A673 (cell line): ENCODE measurements at regions of chr14 and their contacts with region 1.

Region 1: DNA sequence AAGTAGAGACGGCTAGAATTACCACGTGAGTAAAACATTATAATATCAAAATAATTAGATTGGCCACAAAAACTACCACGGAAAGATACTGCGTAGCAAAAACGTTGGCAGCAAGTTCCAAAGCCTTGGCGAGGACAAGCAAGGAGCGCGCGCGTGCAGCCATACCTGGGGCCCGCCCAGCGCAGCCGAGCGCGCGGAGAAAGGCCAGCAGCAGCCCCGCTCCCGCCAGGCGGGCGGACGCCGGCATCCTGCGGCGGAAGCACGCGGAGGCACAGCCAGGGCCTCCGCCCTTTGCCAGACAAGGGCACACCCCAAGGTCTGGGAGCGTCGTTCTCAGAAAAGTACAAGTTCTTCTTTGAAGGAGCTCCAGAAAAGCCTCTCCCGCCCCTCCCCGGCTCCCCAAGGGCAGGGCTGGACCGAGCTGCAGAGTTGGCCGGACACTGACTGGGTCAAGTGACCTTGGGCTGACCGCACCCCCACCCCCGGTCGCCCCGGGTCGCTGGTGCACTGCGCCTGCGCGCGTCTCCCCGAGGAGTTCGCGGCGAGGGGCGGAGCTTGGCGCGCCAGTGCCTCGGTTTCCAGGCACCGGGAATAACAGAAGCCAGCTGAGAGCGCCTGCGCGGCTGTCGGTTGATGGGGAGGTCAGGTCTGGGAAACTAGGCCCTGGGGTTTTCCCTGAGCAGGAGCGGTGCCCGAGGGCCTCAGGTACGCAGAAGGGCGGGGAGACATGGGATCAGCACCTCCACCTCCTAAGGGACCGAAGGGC is at the start of gene ZC2HC1C:
- DNase-seq: peak; percentile 67
- H3K4me3 ChIP-seq: peak within 1 kb of the TSS; percentile 52
- H3K27ac ChIP-seq: peak within 1 kb of the TSS; percentile 85
- H3K4me1 ChIP-seq: peaks cover 18% of the 10 kb centered on the region
- H3K27me3 ChIP-seq: no peaks in the 10 kb centered on the region
- CTCF ChIP-seq: no peak
- total RNA-seq, gene ZC2HC1C: 1.0 TPM in 2 replicates

Region 2: DNA sequence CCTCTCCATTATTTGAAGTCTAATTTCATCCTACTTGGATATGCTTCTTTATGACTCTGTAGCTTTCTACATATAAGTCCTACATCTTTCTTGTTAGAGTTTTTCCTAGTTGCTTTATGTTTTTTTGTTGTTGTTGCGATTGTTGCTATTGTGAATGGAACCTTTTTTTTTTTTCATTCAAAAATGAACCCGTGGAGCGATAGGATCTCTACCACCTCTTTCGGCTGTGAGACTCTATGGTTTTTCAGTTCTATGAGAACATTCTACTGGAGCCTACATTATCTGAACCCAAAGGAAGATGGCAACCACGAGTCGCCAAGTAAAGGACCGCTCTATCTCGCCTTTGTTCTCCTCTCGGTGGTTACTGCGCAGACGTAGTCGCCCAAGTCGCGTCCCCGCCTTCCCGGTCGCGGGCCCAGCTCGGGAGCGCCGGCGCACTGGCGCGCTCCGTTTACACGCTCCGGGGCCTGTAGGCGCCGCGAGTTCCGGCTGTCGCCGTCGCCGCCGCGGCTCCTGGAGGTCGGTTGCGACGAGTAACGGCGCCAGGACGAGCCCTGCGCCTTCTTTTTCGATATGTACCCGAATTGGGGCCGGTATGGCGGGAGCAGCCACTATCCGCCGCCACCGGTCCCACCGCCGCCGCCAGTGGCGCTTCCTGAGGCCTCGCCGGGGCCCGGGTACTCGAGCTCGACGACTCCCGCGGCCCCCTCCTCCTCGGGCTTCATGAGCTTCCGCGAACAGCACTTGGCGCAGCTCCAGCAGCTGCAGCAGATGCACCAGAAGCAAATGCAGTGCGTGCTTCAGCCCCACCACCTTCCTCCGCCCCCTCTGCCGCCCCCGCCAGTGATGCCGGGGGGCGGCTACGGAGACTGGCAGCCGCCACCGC is 306.1 kb before region 1 on chr14 and contains the start of gene YLPM1:
- CTCF ChIA-PET with region 1: no interaction called
- POLR2A ChIA-PET with region 1: no interaction called
- intact Hi-C with region 1: no loop called
- DNase-seq: peak; percentile 98
- H3K4me3 ChIP-seq: peak within 1 kb of the TSS; percentile 94
- H3K27ac ChIP-seq: peak within 1 kb of the TSS; percentile 95
- H3K4me1 ChIP-seq: no peaks in the 10 kb centered on the region
- H3K27me3 ChIP-seq: no peaks in the 10 kb centered on the region
- CTCF ChIP-seq: peak; percentile 65
- total RNA-seq, gene YLPM1: 91.2 and 94.3 TPM in 2 replicates

Region 3: DNA sequence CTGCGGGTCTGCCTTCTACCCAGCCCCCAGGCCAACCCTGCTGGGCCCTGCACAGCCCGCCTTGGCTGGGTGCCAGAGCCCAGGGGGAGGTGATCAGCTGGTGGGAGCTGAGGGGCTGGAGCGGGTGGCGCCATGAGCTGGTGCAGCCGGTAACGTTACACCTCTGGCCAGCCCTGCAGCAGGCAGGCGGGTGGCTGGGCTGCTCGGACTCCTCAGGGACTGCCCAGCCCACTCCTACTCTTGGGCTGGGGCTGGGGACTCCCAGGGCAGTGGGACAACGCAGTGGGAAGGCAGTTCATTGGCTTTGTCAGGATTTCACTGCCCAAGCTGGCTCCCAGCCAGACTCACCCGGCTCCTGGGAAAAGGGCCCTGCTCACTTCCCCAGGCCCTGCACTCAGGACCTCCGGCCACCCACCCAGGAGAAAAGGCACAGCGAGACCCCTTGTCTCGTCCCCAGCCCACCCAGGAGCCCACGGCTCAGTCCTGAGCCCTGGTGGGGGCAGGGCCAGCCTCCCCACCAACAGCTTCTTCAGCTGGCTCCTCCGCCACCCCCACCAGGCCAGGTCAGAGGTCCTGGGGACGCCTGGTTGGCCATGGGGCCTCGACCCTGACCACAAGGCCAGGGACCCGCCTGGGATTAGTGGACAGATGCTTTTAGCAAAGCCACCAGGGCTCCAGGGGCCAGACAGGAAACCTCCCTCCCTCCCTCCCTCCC is 114.8 kb before region 1 on chr14:
- CTCF ChIA-PET with region 1: no interaction called
- POLR2A ChIA-PET with region 1: no interaction called
- intact Hi-C with region 1: loop called (anchors 5 kb)
- DNase-seq: peak; percentile 72
- H3K4me3 ChIP-seq: peak overlapping the region; percentile 92
- H3K27ac ChIP-seq: peak overlapping the region; percentile 72
- H3K4me1 ChIP-seq: peaks cover 15% of the 10 kb centered on the region
- H3K27me3 ChIP-seq: no peaks in the 10 kb centered on the region
- CTCF ChIP-seq: no peak